HepG2 (cell line): ENCODE measurements at regions of chr19 and their contacts with region 1.

Region 1: GRCh38 chr19:38849860-38850435 is at the start of gene HNRNPL:
- DNase-seq: peak; percentile 100
- ATAC-seq: peak; percentile 75
- H3K4me3 ChIP-seq: peak within 1 kb of the TSS; percentile 67 to 87 (median 72)
- H3K27ac ChIP-seq: peak within 1 kb of the TSS; percentile 96
- H3K4me1 ChIP-seq: peaks cover 64% of the 10 kb centered on the region
- H3K27me3 ChIP-seq: no peaks in the 10 kb centered on the region; a peak in 1 of 5 replicates
- CTCF ChIP-seq: peak; percentile 69
- EP300 ChIP-seq: no peak
- POLR2A ChIP-seq: peak; percentile 67 to 80; a peak in 3 of 4 replicates
- RAD21 ChIP-seq: peak; percentile 3; the same call in 1 of the 2 replicates
- total RNA-seq, gene HNRNPL: 270 and 278 TPM in 2 replicates

Region 2: GRCh38 chr19:38784224-38784623 is 65.7 kb before region 1 on chr19:
- CTCF ChIA-PET with region 1: no interaction called
- POLR2A ChIA-PET with region 1: no interaction called
- in situ Hi-C with region 1: no loop called
- intact Hi-C with region 1: no loop called
- DNase-seq: peak; percentile 63
- ATAC-seq: peak; percentile 33; the same call in 1 of the 3 replicates
- H3K4me3 ChIP-seq: no peak overlapping the region
- H3K27ac ChIP-seq: no peak overlapping the region
- H3K4me1 ChIP-seq: peaks cover 54% of the 10 kb centered on the region
- H3K27me3 ChIP-seq: no peaks in the 10 kb centered on the region; a peak in 1 of 5 replicates
- CTCF ChIP-seq: no peak
- EP300 ChIP-seq: no peak
- POLR2A ChIP-seq: no peak
- RAD21 ChIP-seq: no peak

Region 3: GRCh38 chr19:38805180-38805579 is 44.8 kb before region 1 on chr19:
- CTCF ChIA-PET with region 1: no interaction called
- POLR2A ChIA-PET with region 1: no interaction called
- in situ Hi-C with region 1: no loop called
- intact Hi-C with region 1: no loop called
- DNase-seq: no peak
- ATAC-seq: no peak
- H3K4me3 ChIP-seq: no peak overlapping the region
- H3K27ac ChIP-seq: no peak overlapping the region
- H3K4me1 ChIP-seq: peaks cover 25% of the 10 kb centered on the region
- H3K27me3 ChIP-seq: no peaks in the 10 kb centered on the region
- CTCF ChIP-seq: no peak
- EP300 ChIP-seq: no peak
- POLR2A ChIP-seq: no peak
- RAD21 ChIP-seq: no peak

Region 4: DNA sequence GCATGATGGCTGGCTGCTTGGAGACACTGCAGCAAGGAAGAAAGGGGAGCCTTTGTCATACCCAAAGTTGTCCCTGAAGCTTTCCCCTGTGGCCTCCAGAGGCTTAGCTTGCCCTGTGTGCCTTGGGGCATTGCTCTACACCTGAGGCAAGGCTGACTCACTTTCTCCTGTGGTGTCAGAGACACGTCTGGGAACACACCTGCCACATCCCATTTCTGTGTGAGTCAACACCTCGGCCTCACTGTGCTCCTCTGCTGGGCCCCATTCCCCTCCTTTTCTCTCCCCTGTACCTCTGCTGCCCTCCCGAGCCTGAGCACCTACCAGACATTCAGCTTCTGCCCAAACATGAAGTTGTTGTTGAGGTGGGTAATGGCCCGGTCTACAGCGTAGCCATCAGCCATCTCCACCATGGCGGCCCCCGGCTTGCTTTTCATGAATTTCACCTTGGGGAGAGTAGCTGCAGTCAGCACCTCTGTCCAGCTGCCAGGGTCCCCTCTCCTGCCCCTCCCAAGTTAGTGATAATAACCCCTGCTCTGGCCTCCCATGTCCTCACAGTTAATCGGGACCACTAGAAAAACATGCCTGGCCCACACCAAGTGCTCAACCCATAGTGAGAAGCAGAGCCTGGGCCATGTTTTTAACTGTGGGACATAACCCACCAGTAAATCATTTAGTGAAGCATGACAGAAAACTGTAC is 11.2 kb before region 1 on chr19:
- CTCF ChIA-PET with region 1: no interaction called
- POLR2A ChIA-PET with region 1: interaction called, 148 read pairs
- in situ Hi-C with region 1: no loop called
- intact Hi-C with region 1: no loop called
- DNase-seq: no peak
- ATAC-seq: peak; percentile 4
- H3K4me3 ChIP-seq: no peak overlapping the region
- H3K27ac ChIP-seq: peak overlapping the region; percentile 60
- H3K4me1 ChIP-seq: peaks cover 68% of the 10 kb centered on the region
- H3K27me3 ChIP-seq: no peaks in the 10 kb centered on the region
- CTCF ChIP-seq: 0 out of 2 replicates have a peak, but pooled peaks have one; percentile 9
- EP300 ChIP-seq: no peak
- POLR2A ChIP-seq: peak in 1 of 2 experiments; percentile 2; a peak in 1 of 4 replicates
- RAD21 ChIP-seq: no peak

Region 5: GRCh38 chr19:38862321-38863059 is 12.5 kb after region 1 on chr19:
- CTCF ChIA-PET with region 1: no interaction called
- POLR2A ChIA-PET with region 1: interaction called, 14 read pairs
- in situ Hi-C with region 1: no loop called
- intact Hi-C with region 1: no loop called
- DNase-seq: no peak
- ATAC-seq: no peak
- H3K4me3 ChIP-seq: no peak overlapping the region
- H3K27ac ChIP-seq: no peak overlapping the region
- H3K4me1 ChIP-seq: peaks cover 53% of the 10 kb centered on the region
- H3K27me3 ChIP-seq: no peaks in the 10 kb centered on the region
- CTCF ChIP-seq: no peak
- EP300 ChIP-seq: no peak
- POLR2A ChIP-seq: no peak
- RAD21 ChIP-seq: no peak

Region 6: DNA sequence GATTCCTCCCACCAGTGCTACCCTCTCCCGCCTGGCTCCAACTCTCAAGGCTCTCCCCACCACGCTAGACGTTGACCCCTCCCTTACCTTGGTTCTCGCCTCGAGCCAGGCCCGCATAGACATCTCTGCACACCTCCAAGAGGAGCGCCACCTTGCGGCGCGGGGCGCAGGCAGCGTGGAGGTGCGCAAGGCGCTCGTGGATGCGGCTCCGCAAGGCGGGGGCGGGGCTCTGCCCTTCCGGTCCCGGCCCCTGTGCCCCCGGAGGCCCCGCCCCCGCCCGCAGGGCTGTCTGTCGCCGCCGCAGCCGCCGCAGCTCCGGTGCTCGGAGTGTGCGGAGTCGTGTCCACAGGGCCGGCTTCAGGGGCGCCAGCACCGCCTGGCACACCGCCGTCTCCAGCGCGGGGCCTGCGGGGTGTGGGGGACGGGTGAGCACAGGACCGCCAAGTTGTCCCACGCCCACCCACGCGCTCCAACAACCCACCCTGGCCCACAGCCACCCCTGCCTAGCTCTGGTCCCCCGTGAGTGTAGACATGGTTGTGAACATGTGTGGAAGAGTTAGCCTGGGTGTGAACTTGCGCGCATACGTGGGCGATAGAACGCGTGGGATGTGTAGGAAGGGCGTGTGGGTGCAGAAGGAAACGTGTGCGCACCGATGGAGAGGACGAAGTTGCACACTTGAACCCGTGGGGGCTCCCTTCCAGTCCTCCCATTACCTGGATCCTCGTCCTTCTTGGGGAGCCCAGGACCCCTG is 20.1 kb after region 1 on chr19:
- CTCF ChIA-PET with region 1: no interaction called
- POLR2A ChIA-PET with region 1: interaction called, 11 read pairs
- in situ Hi-C with region 1: no loop called
- intact Hi-C with region 1: no loop called
- DNase-seq: no peak
- ATAC-seq: no peak
- H3K4me3 ChIP-seq: no peak overlapping the region
- H3K27ac ChIP-seq: no peak overlapping the region
- H3K4me1 ChIP-seq: peaks cover 6% of the 10 kb centered on the region
- H3K27me3 ChIP-seq: no peaks in the 10 kb centered on the region
- CTCF ChIP-seq: no peak
- EP300 ChIP-seq: no peak
- POLR2A ChIP-seq: no peak
- RAD21 ChIP-seq: no peak

Region 7: DNA sequence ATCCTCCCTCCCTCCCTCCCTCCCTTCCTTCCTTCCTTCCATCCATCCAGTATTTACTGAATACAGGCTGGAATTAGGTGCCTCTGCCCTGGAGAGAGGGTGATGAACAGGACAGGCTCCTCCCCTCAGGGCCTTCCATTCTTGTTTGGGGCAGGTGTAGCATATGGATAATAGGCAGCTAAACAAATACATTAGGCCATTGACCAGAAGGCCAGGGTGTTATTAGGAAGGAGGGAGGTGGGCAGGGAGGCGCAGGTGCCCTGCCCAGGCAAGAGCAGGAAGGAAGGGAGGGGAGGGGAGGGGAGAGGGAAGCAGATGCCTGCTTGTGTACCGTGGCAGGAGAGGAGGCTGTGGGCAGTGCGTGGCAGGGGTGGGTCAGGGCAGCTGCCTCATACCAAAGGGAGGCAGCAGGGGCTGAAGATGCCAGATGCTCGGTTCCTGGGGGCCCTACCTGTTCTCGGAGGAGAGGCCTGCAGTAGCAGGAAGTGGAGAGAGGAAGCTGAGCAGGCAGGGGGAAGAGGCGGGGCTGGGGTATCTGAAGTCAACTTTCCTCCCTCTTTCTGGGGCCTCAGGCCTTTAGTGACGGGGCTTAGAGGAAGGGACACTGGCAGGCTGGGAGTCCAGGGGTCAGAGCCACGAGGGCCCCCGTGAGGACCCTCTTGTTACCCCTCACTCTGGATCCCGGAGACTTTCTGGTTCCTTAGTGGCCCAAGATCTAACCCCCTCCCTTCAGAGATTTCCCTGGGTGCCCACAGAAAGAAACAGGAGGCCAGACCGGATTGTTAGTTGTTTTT is 28.0 kb after region 1 on chr19 and contains the start of gene RINL:
- CTCF ChIA-PET with region 1: no interaction called
- POLR2A ChIA-PET with region 1: interaction called, 37 read pairs
- in situ Hi-C with region 1: no loop called
- intact Hi-C with region 1: no loop called
- DNase-seq: no peak
- ATAC-seq: peak; percentile 76
- H3K4me3 ChIP-seq: peak within 1 kb of the TSS; percentile 72 to 86 (median 82)
- H3K27ac ChIP-seq: peak within 1 kb of the TSS; percentile 58
- H3K4me1 ChIP-seq: peaks cover 45% of the 10 kb centered on the region
- H3K27me3 ChIP-seq: no peaks in the 10 kb centered on the region
- CTCF ChIP-seq: no peak
- EP300 ChIP-seq: no peak
- POLR2A ChIP-seq: peak; percentile 36 to 73; a peak in 2 of 4 replicates
- RAD21 ChIP-seq: no peak
- total RNA-seq, gene RINL: 10.3 and 11.4 TPM in 2 replicates

Region 8: GRCh38 chr19:38899447-38900219 is 49.7 kb after region 1 on chr19 and contains the starts of genes NFKBIB and SIRT2:
- CTCF ChIA-PET with region 1: no interaction called
- POLR2A ChIA-PET with region 1: interaction called, 16 read pairs
- in situ Hi-C with region 1: no loop called
- intact Hi-C with region 1: loop called (anchors 2 kb)
- DNase-seq: peak; percentile 99
- ATAC-seq: peak; percentile 95
- H3K4me3 ChIP-seq: peak within 1 kb of the TSS; percentile 73 to 87 (median 83)
- H3K27ac ChIP-seq: peak within 1 kb of the TSS; percentile 73
- H3K4me1 ChIP-seq: peaks cover 34% of the 10 kb centered on the region
- H3K27me3 ChIP-seq: no peaks in the 10 kb centered on the region; a peak in 1 of 5 replicates
- CTCF ChIP-seq: peak; percentile 42
- EP300 ChIP-seq: peak in 1 of 2 experiments; percentile 4; a peak in 1 of 4 replicates
- POLR2A ChIP-seq: peak in 1 of 2 experiments; percentile 59; a peak in 2 of 4 replicates
- RAD21 ChIP-seq: peak; percentile 15; the same call in 1 of the 2 replicates
- total RNA-seq, gene NFKBIB: 13.8 and 14.9 TPM in 2 replicates
- total RNA-seq, gene SIRT2: 20.3 and 22.3 TPM in 2 replicates